IMR-90 (cell line): ENCODE measurements at regions of chr21 and their contacts with region 1.

Region 1: DNA sequence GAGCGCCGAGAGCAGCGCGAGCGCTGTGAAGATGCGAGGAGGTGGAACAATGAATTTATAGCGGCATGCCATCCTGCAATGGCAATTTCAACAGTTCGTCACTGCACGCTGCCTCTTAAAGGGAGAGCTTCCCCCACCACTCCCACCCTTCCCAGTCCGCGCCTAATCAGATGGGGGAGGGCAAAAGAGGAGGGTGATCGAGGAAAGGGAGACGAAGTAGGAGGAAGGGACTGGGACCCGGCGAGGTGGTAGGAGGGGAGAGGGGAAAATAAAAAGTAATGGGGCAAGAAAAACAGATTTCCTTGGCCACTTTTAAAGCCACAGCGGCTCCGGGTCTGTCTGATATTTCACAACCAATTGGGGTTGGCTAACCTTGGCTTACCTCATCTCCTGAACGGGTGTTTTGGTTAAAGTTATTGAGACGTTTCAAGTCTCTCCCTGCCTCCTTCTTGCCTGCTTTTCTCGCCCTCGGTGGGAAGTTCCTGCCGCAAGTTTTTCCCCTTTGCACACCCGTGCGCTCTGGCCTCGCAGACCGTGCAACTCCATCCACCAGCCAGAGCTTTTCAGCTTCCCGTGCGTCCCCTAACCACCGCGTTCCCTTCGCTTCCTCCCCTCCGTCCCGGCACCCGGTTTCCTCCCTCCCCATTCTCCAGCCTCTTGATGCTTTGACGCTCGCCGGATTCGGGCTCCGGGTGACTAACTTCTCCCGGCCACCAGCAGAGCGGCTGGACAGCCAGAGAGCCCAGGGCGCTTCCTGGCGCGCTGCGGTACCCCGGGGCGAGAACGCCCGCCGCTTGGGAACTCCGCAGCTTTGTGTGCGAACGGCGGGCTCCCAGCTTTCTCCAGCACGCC is at the start of gene ADAMTS5:
- DNase-seq: peak; percentile 69
- ATAC-seq: peak; percentile 61
- H3K4me3 ChIP-seq: peak within 1 kb of the TSS; percentile 65
- H3K27ac ChIP-seq: peak within 1 kb of the TSS; percentile 80
- H3K4me1 ChIP-seq: no peaks in the 10 kb centered on the region; the same call in 1 of the 2 replicates
- H3K27me3 ChIP-seq: no peaks in the 10 kb centered on the region
- CTCF ChIP-seq: 0 out of 2 replicates have a peak, but pooled peaks have one; percentile 4
- POLR2A ChIP-seq: peak; percentile 65
- RAD21 ChIP-seq: no peak; the same call in 1 of the 2 replicates
- total RNA-seq, gene ADAMTS5: 0.54 and 1.1 TPM in 2 replicates

Region 2: GRCh38 chr21:26881504-26882228 is 85.6 kb before region 1 on chr21:
- CTCF ChIA-PET with region 1: no interaction called
- POLR2A ChIA-PET with region 1: no interaction called
- dilution Hi-C with region 1: no loop called
- in situ Hi-C with region 1: no loop called
- intact Hi-C with region 1: loop called (anchors 5 kb)
- DNase-seq: peak; percentile 39
- ATAC-seq: peak; percentile 53; the same call in 1 of the 2 replicates
- H3K4me3 ChIP-seq: no peak overlapping the region
- H3K27ac ChIP-seq: no peak overlapping the region
- H3K4me1 ChIP-seq: no peaks in the 10 kb centered on the region; the same call in 1 of the 2 replicates
- H3K27me3 ChIP-seq: no peaks in the 10 kb centered on the region
- CTCF ChIP-seq: peak; percentile 48
- POLR2A ChIP-seq: no peak
- RAD21 ChIP-seq: peak; percentile 66

Region 3: DNA sequence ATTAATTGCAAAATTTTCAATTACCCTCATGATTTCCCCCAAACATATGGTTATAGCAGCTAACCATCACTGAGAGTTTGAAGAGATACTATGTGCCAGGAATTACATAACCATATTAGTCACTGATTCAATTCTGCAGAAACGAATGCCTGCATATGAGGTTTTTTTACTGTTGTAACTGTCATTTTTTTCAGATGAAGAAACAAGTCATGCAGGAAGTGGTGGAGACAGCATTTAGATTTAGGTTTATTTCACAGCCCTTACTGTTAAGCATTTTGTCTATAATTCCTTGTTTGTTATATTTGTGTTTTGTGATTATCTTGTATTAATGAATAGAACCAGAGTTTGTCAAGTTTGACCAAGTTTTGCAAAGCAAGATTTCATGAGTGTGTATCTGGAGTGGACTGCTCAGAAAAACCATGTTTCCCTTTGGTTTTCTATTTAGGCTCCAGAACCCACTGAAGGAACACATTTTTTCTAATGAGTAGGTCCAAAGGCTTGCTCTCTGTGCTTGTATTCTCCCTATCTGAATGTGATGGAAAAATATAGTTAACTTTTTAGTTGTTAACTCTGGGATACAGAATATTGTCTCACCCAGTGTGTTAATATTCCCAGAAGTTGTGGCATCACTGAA is 308.1 kb after region 1 on chr21:
- CTCF ChIA-PET with region 1: no interaction called
- POLR2A ChIA-PET with region 1: no interaction called
- dilution Hi-C with region 1: no loop called
- in situ Hi-C with region 1: no loop called
- intact Hi-C with region 1: loop called (anchors 5 kb)
- DNase-seq: peak; percentile 88
- ATAC-seq: peak; percentile 61
- H3K4me3 ChIP-seq: no peak overlapping the region
- H3K27ac ChIP-seq: 0 out of 2 replicates have a peak overlapping the region, but pooled peaks have one; percentile 37
- H3K4me1 ChIP-seq: peaks cover 10% of the 10 kb centered on the region
- H3K27me3 ChIP-seq: no peaks in the 10 kb centered on the region
- CTCF ChIP-seq: no peak
- POLR2A ChIP-seq: no peak
- RAD21 ChIP-seq: no peak

Region 4: GRCh38 chr21:27570306-27570868 is 603.1 kb after region 1 on chr21:
- CTCF ChIA-PET with region 1: no interaction called
- POLR2A ChIA-PET with region 1: no interaction called
- dilution Hi-C with region 1: no loop called
- in situ Hi-C with region 1: no loop called
- intact Hi-C with region 1: loop called (anchors 2 kb)
- DNase-seq: peak; percentile 94
- ATAC-seq: peak; percentile 77
- H3K4me3 ChIP-seq: no peak overlapping the region
- H3K27ac ChIP-seq: peak overlapping the region; percentile 99
- H3K4me1 ChIP-seq: peaks cover 15% of the 10 kb centered on the region
- H3K27me3 ChIP-seq: no peaks in the 10 kb centered on the region
- CTCF ChIP-seq: no peak
- POLR2A ChIP-seq: no peak
- RAD21 ChIP-seq: peak; percentile 18; the same call in 1 of the 2 replicates